ENCODE measurements at regions of chr5 and their contacts with region 1.

Region 1: DNA sequence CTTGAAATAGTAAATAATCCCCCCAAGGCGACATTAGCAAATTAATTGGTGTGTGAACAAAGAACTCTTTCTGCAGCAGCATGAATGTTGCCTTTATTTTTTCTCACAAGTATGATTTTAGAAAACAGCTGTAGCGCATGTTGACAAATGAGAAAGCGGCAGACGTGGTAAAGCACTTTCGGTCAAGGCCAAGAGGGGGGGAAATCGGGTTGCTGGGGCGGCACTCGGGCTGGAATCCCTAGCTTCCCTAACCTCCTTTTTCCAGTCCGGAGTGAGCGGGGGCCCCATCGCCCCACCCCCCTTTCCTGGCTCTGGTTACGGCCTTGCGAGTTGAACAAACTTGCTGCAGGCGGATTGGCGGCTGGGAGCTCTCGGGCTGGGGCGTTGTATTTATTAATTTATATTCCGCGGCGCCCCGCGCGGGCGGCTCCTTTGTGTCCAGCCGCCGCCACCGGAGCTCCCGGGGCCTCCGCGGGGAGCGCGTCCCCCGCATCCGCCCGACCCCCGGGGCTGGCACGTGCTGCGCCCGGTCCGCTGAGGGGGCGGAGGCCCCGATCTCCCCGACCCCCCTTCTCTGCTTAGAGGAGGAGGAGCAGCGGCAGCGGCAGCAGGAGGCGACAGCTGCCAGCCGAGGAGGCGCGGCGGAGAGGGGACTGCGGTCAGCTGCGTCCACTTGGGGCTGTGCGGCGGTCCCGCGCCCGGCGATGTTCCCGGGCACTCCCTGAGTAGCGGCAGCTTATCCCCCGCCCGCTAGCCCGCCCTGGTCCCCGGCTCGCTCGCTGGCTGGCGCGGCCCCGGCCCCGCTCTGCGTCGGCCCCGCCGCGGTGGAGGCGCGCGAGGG is at the start of gene RHOBTB3:
- DNase-seq: peak; percentile 88 to 92 (median 90)
- ATAC-seq: peak; percentile 74
- H3K4me3 ChIP-seq: peak within 1 kb of the TSS; percentile 84
- H3K4me1 ChIP-seq: peaks cover 23% of the 10 kb centered on the region
- CTCF ChIP-seq: no peak
- total RNA-seq, gene RHOBTB3: 56.5 to 85.2 (median 60.4) TPM

Region 2: GRCh38 chr5:95554647-95555548 is 176.1 kb before region 1 on chr5 and contains the starts of genes ARSK and SKIC3:
- intact Hi-C with region 1: no loop called
- DNase-seq: peak; percentile 93 to 95 (median 95)
- ATAC-seq: peak; percentile 98
- H3K4me3 ChIP-seq: peak within 1 kb of the TSS; percentile 46
- H3K4me1 ChIP-seq: peaks cover 10% of the 10 kb centered on the region
- CTCF ChIP-seq: no peak
- total RNA-seq, gene ARSK: 1.7 to 6.0 (median 2.3) TPM
- total RNA-seq, gene SKIC3: 49.6 to 73.6 (median 51.5) TPM

Region 3: GRCh38 chr5:95600557-95600956 is 130.4 kb before region 1 on chr5:
- intact Hi-C with region 1: no loop called
- DNase-seq: no peak
- ATAC-seq: no peak
- H3K4me3 ChIP-seq: no peak overlapping the region
- H3K4me1 ChIP-seq: no peaks in the 10 kb centered on the region
- CTCF ChIP-seq: no peak

Region 4: DNA sequence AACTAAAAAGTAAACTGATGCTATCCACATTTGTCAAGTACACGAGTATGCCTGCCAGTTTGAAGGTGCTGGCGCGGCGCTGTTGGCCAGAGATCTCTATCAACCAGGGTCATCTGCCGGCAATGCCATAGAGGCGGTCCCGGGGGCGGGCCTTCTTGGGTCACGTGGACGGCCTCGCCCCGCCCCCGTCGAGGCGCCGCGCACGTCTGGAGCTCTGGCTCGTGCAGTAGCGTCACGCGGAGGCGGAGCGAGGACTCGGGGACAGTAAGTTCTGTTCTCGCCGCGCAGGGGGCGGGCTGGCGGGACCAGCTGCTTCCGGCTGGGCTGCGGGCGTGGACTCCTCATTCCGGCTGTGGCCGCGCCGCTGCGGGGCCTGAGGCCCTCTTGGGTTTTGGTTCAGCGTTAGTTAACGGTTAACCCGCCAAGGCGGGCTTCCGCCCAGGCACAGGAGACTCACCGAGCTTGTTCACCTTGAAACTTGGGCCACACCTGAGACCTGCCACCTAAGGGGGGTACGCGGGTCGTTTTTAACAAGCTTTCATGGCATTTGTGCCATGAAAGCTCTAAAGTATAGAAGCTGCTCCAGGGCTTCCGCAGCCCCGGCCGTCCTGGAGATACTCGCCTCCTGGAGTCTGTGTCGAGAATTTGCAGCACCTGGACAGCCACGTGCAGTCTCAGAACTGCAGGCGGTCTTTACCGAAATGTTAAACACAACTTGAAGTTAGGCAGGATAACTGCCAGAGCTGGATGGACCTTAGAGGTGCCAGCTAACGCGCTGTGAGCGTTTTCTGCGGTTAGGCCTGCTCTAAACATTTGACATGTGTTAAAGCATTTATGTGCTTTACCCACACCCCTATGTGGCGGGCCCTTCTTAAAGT is 84.2 kb before region 1 on chr5 and contains the start of gene RFESD:
- intact Hi-C with region 1: loop called in 1 of 2 experiments (anchors 5 kb)
- DNase-seq: peak; percentile 100
- ATAC-seq: peak; percentile 98
- H3K4me3 ChIP-seq: no peak within 1 kb of the TSS
- H3K4me1 ChIP-seq: peaks cover 20% of the 10 kb centered on the region
- CTCF ChIP-seq: peak; percentile 21
- total RNA-seq, gene RFESD: 0.31 to 2.5 (median 1.4) TPM

Region 5: DNA sequence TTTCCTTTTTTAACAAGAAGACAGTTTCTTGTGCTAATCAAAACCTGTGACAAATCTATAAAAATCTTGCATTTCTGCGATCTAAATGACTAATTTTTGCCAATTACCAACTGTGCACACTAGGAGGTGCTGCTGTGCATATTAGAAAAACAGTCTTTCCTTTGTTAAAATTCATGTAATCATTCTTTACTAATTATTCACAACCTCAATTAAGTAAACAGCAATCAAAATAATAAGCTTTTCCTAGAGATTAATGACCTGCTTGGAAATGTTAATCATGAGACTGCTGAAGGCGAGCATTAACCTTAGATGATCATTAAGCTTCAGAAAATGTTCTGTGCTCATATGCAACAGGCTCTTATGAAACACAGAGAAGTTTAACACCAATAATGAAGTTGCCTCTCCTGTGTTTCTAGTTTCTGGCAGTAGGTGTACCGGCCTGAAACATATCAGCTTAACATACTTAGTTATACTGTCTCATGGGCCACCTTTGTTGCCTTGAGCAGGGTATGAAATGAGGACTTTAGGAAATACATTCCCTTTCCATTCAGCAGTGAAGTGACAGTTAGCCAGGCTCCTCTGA is 66.7 kb before region 1 on chr5:
- intact Hi-C with region 1: loop called in 1 of 2 experiments (anchors 10 kb)
- DNase-seq: peak in 1 of 3 donors; percentile 76
- ATAC-seq: peak; percentile 48
- H3K4me3 ChIP-seq: no peak overlapping the region
- H3K4me1 ChIP-seq: no peaks in the 10 kb centered on the region
- CTCF ChIP-seq: peak; percentile 53

Measured in mucosa of descending colon (tissue), 3 donors.